Activated T-helper 1 cell treated with anti-CD3 and anti-CD28 coated beads, Interleukin-12 subunit alpha, Interleukin-12 subunit beta, Interleukin-2, Interleukin-4 antibody, amounts not matched to agents 30 ng/mL and 10 ng/mL and 1 ng/mL, durations not matched to agents 14 hours and 24 hours and 36 hours (primary cell): ENCODE measurements at regions of chr12 and their contacts with region 1.

Region 1: DNA sequence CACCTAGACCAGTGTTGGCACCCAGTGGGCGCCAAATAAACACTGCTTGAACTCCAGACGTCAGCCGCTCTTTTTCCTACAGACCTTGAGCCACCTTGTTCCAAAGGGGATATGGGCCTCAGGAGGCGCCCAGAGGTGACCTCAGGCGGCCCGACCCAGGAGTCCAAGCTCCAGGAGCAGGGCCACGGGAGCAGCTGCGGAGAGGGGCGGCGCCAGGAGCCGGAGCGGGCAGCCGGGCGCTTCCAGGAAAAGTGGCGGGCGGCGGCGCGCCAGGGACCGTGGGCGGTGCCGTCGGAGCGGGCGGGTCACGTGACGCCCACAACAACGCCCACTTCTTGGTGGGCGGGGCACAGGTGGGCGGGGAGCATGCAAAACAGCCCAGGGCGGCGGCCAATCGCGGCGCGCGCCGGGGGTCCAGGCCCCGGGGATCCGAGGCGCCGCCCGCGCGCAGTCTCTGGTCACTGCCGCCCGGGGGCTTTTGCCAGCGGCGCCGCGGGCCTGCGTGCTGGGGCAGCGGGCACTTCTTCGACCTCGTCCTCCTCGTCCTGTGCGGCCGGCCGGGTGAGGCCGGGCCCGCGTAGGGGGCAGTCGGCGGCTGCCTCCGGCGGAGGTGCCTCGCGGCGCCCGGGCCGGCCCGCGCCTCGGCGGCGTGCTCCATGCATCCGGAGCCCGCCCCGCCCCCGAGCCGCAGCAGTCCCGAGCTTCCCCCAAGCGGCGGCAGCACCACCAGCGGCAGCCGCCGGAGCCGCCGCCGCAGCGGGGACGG is at the start of gene ORAI1:
- DNase-seq: peak; percentile 96
- H3K4me3 Mint-ChIP-seq: peak within 1 kb of the TSS; percentile 92
- H3K27ac Mint-ChIP-seq: peak within 1 kb of the TSS; percentile 95
- H3K4me1 Mint-ChIP-seq: peaks cover 49% of the 10 kb centered on the region
- H3K27me3 Mint-ChIP-seq: no peaks in the 10 kb centered on the region
- total RNA-seq, gene ORAI1: 61.5 and 67.0 TPM in 2 replicates

Region 2: GRCh38 chr12:121296618-121297434 is 329.4 kb before region 1 on chr12 and contains the start of gene CAMKK2:
- intact Hi-C with region 1: loop called (anchors 5 kb)
- DNase-seq: peak; percentile 91
- H3K4me3 Mint-ChIP-seq: peak within 1 kb of the TSS; percentile 94
- H3K27ac Mint-ChIP-seq: peak within 1 kb of the TSS; percentile 88
- H3K4me1 Mint-ChIP-seq: peaks cover 35% of the 10 kb centered on the region
- H3K27me3 Mint-ChIP-seq: no peaks in the 10 kb centered on the region
- total RNA-seq, gene CAMKK2: 38.1 and 41.0 TPM in 2 replicates

Region 3: DNA sequence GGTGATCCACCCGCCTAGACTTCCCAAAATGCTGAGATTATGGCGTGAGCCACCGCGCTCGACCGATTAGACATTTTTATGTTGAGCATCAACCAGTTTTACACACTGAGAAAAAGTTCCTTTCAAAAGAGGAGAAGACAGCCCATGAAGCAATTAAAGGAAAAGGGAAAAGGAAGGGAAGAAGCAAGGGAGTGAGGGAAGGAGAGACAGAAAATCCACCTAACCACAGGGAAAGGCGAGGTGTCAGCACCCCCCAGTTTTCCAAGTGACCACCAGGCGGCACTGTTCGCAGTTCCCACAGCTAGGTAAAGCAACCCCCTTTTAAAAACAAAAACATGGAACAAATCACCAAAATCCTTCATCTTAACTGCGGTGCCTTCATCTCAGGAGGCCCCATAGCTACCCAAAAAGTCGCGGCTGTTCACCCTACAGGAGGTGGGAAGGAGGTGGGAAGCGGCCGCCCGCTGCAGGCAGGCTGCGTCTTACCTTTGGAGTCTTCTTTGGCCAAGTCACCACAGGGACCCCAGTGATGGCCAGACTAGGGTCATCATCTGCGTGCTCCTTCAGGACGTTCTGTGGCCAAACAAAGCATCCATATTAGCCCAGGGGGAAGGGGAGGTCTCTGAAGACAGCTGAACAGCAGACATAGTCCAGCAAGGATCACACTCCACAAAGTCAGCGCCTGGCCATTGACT is 132.0 kb before region 1 on chr12:
- intact Hi-C with region 1: loop called (anchors 1 kb)
- DNase-seq: peak; percentile 15
- H3K4me3 Mint-ChIP-seq: no peak overlapping the region
- H3K27ac Mint-ChIP-seq: no peak overlapping the region
- H3K4me1 Mint-ChIP-seq: peaks cover 21% of the 10 kb centered on the region
- H3K27me3 Mint-ChIP-seq: no peaks in the 10 kb centered on the region

Region 4: DNA sequence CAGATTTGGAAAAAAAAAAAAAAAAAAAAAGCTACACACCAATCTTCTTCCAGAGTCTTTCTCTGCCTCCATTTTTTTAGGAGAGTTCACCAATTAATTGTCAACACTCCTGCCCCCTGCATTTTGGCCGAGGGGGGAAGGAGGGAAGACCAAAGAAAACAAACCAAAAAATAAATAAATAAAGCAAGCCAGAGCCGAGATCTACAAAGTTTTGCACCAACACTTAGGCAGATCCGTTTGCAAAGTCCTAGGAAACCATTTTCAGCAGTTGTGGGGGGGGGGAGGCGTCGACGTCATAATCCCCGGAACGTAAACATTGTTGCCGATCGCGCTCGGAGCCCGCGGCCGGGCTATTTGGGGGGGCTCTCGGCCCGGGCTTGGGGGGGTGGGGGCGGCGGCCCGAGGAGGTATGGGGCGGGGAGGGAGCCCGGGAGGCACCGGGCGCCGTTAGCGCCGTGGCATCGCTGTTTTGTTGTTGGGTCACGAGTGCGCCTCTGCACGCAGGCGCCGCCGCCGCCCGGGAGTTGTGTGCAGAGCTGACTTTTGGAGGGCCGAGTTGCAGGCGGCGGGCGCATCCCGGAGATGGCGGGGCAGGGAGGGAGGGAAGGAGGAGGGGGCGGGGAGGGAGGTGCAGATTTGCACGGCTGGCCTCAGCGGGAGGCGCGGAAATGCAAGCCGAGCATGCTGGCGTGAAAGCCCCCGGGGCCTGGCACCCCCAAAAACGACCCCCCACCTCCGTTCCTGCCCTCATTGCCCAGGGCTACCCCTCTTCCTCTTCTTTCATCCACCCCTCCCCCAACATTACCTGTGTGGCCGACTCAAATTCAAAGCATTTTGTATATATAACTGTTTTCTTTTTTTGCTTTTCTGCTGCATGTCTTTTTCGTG is 46.0 kb before region 1 on chr12:
- intact Hi-C with region 1: loop called (anchors 1 kb)
- DNase-seq: peak; percentile 67
- H3K4me3 Mint-ChIP-seq: peak overlapping the region; percentile 98
- H3K27ac Mint-ChIP-seq: peak overlapping the region; percentile 100
- H3K4me1 Mint-ChIP-seq: peaks cover 40% of the 10 kb centered on the region
- H3K27me3 Mint-ChIP-seq: no peaks in the 10 kb centered on the region

Region 5: DNA sequence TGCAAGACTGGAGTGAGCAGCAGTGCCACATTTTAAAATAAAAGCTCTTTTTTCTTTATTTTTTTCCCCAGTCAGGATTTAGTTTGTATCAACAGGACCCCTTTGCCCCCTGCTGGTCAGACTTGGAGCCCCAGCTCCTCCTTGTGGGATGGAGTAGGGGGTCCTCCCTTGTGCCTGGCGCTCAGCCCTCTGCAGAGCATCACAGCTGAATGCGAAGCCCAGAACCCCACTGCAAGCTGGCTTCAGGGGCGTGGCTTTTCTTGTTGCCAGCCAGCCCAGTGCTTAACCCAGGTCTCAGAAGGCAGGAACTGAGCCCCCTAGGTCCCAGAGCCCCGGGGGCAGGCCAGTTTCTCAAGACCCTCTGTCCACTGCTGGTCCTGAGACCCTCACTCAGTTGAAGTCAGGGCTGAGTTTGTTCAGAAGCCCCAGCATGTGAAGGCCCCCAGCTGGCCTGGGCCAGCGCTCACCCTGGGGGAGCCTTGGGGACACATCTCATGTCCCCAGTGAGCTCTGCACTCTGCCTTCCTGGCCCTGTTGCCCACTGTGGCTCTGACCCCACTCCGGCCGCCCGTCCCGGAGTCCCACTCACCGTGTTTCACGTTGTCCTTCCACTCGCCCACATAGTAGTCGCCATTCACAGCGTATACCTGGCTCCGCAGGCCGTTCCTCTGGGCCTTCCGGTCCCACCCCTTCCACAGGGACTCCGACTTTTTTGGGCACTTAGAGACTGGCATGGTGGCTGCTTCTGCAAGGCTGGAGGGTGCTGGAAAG is 42.7 kb after region 1 on chr12:
- intact Hi-C with region 1: loop called (anchors 1 kb)
- DNase-seq: peak; percentile 17
- H3K4me3 Mint-ChIP-seq: no peak overlapping the region
- H3K27ac Mint-ChIP-seq: peak overlapping the region; percentile 40
- H3K4me1 Mint-ChIP-seq: peaks cover 44% of the 10 kb centered on the region
- H3K27me3 Mint-ChIP-seq: no peaks in the 10 kb centered on the region

Region 6: GRCh38 chr12:121773011-121773777 is 146.9 kb after region 1 on chr12:
- intact Hi-C with region 1: no loop called
- DNase-seq: peak; percentile 71
- H3K4me3 Mint-ChIP-seq: no peak overlapping the region
- H3K27ac Mint-ChIP-seq: no peak overlapping the region
- H3K4me1 Mint-ChIP-seq: peaks cover 7% of the 10 kb centered on the region
- H3K27me3 Mint-ChIP-seq: no peaks in the 10 kb centered on the region

Region 7: DNA sequence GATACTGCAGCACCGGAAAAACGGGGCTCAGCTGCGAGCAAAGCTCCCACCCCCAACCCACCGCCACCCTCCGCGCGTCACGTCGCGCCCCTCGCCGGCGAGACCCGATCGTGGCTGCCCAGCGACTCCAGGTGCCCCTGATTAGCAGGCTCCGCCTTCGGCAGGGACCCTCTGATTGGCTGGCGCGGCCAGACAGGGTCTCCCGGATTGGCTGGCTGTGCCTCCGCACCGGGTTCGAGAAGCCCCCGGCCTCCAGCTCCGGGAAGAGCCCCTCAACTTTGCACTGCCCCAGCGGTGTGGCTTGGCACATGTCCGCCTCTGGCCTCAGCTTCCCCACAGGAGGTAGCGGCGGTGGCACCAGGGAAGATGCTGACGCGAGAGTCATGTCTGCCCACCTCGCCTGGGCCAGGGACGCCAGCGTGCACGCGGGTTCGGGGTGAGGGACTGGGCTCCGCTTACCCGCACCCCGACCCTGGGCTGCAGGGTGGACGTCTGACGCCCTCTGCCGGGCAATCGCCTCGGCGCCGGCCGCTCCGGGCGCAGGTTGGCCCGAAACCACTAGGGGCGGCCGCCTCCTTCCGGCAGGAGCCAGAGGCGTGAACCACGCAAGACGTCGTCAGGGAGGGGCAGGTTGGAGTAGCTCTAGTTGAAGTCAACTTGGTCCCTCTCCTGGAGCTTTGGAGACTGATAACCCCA is 167.7 kb after region 1 on chr12:
- intact Hi-C with region 1: loop called (anchors 2 kb)
- DNase-seq: peak; percentile 95
- H3K4me3 Mint-ChIP-seq: peak overlapping the region; percentile 96
- H3K27ac Mint-ChIP-seq: peak overlapping the region; percentile 91
- H3K4me1 Mint-ChIP-seq: peaks cover 61% of the 10 kb centered on the region
- H3K27me3 Mint-ChIP-seq: no peaks in the 10 kb centered on the region

Region 8: DNA sequence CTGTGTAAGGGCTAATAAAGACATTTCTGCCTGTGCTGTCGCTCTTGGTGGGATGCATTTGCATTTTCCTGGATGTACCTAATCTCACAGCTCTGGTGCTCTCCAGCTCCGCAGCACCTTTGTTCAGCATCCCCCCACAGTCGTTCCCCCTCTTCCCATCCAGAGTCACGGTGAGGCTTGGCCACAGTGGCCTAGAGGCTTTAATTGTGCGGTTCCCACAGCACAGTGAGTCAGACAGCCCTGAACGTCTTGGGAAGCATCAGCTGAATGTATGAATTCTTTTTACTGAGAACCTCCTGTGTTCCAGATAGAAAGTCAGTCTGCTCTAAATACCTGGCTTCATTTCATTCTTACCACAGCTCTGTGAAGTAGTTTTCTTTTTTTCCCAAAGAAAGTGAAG is 481.0 kb after region 1 on chr12:
- intact Hi-C with region 1: no loop called
- DNase-seq: no peak
- H3K4me3 Mint-ChIP-seq: no peak overlapping the region
- H3K27ac Mint-ChIP-seq: no peak overlapping the region
- H3K4me1 Mint-ChIP-seq: peaks cover 62% of the 10 kb centered on the region
- H3K27me3 Mint-ChIP-seq: no peaks in the 10 kb centered on the region